ENCODE measurements at regions of chr19 and their contacts with region 1.

Region 1: GRCh38 chr19:2475702-2476450 is at the start of gene GADD45B:
- H3K4me3 Mint-ChIP-seq: peak within 1 kb of the TSS; percentile 99
- H3K27ac Mint-ChIP-seq: peak within 1 kb of the TSS; percentile 95
- H3K4me1 Mint-ChIP-seq: peaks cover 44% of the 10 kb centered on the region
- H3K27me3 Mint-ChIP-seq: peaks cover 8% of the 10 kb centered on the region

Region 2: GRCh38 chr19:2494444-2495129 is 18.7 kb after region 1 on chr19:
- intact Hi-C with region 1: loop called (anchors 2 kb)
- H3K4me3 Mint-ChIP-seq: peak overlapping the region; percentile 68
- H3K27ac Mint-ChIP-seq: no peak overlapping the region
- H3K4me1 Mint-ChIP-seq: peaks cover 38% of the 10 kb centered on the region
- H3K27me3 Mint-ChIP-seq: peaks cover 62% of the 10 kb centered on the region

Region 3: GRCh38 chr19:2552859-2553258 is 77.0 kb after region 1 on chr19:
- intact Hi-C with region 1: loop called (anchors 2 kb)
- H3K4me3 Mint-ChIP-seq: peak overlapping the region; percentile 62
- H3K27ac Mint-ChIP-seq: peak overlapping the region; percentile 79
- H3K4me1 Mint-ChIP-seq: peaks cover 67% of the 10 kb centered on the region
- H3K27me3 Mint-ChIP-seq: peaks cover 14% of the 10 kb centered on the region

Region 4: DNA sequence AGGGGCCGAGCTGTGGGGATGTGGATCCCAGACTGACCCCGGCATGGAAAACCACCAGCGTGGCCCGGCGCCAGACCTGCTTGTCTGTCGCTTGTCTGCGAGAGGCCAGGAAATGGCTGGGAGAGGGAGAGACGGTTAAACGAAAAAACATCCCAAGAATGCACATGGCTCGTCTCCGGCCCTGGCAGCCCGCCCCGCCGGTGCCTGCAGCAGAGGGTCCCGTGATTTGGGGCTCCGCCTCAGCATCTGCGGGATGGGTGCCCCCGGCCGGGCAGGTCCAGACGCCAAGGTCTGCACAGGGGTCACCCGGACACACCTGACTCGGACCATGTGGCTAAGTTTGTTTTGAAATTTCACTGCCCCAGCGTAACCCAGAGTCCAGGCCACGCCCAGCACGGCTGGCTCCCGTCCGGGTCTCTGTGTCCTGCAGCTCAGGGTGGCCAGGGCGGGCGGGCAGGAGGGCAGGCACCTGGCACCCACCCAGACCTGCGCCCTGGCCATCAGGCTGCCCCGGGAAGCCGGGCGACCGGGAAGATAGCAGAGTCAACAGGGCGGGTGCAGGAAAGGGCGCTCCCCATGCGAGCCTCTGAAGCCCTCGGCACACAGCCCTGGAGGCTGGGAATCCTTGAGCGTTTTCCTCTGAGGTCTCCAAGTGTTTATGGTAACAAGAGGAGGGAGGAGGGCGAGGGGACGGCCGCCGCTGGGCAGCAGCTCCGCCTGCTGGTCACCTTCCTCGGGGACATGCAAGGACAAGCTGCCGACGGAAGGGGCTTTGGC is 103.2 kb after region 1 on chr19:
- intact Hi-C with region 1: loop called (anchors 1 kb)
- H3K4me3 Mint-ChIP-seq: peak overlapping the region; percentile 60
- H3K27ac Mint-ChIP-seq: peak overlapping the region; percentile 37
- H3K4me1 Mint-ChIP-seq: peaks cover 25% of the 10 kb centered on the region
- H3K27me3 Mint-ChIP-seq: peaks cover 32% of the 10 kb centered on the region

Region 5: GRCh38 chr19:2610637-2611482 is 135.0 kb after region 1 on chr19:
- intact Hi-C with region 1: loop called (anchors 2 kb)
- H3K4me3 Mint-ChIP-seq: peak overlapping the region; percentile 78
- H3K27ac Mint-ChIP-seq: peak overlapping the region; percentile 81
- H3K4me1 Mint-ChIP-seq: peaks cover 49% of the 10 kb centered on the region
- H3K27me3 Mint-ChIP-seq: peaks cover 19% of the 10 kb centered on the region

Region 6: GRCh38 chr19:2631213-2631837 is 155.4 kb after region 1 on chr19:
- intact Hi-C with region 1: loop called (anchors 5 kb)
- H3K4me3 Mint-ChIP-seq: no peak overlapping the region
- H3K27ac Mint-ChIP-seq: peak overlapping the region; percentile 89
- H3K4me1 Mint-ChIP-seq: peaks cover 86% of the 10 kb centered on the region
- H3K27me3 Mint-ChIP-seq: peaks cover 10% of the 10 kb centered on the region